Tibial artery (tissue), 4 donors: ENCODE measurements at regions of chr17 and their contacts with region 1.

Region 1: DNA sequence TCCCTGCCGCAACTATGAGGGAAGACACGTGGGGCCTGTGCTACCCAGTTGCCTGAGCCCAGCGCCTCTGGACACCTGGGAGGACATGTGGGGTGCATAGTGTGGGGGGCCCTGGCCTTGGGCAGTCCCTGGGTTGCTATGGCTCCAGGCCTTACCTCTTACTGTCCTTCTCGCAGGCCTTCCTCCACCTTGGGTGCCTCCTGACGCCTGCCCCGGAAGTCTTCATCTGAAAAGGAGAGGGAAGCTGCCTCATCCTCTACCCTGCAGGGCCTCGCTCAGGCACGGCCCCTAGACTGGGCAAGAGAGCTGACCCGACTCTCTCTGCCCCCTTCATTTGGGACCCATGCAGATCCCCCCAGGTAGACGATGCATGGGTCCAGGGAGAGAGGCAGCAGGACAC is 16.5 kb upstream of the MRPS23 start:
- DNase-seq: no peak
- H3K4me3 ChIP-seq: no peak overlapping the region
- H3K27ac ChIP-seq: peak overlapping the region in 1 of 2 donors; percentile 82
- H3K4me1 ChIP-seq: peaks cover 11 to 48% (median 43%) of the 10 kb centered on the region in 4 donors
- H3K27me3 ChIP-seq: no peaks in the 10 kb centered on the region
- CTCF ChIP-seq: no peak

Region 2: DNA sequence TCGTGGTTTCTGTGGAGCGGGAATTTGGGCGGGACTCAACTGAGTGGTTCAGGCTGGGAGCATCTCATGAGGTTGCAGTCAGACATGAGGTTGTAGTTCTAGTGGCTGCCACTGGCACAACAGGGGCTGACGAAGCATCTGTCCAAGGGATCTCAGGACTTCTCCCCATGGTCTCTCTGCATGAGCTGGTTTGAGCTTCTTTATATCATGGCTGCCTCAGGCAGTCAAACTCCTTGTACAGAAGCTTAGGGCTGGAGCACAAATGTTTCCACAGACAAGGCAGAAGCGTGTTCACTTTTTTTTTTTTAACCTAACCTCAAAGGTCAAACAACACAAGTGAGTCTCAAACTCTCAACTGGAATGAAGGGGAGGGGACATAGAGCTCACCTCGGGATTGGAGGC is 366.7 kb before region 1 on chr17:
- intact Hi-C with region 1: no loop called
- DNase-seq: no peak
- H3K4me3 ChIP-seq: no peak overlapping the region
- H3K27ac ChIP-seq: no peak overlapping the region
- H3K4me1 ChIP-seq: no peaks in the 10 kb centered on the region
- H3K27me3 ChIP-seq: no peaks in the 10 kb centered on the region
- CTCF ChIP-seq: no peak

Region 3: GRCh38 chr17:57997085-57997809 is 130.9 kb after region 1 on chr17:
- intact Hi-C with region 1: loop called (anchors 2 kb)
- DNase-seq: no peak
- H3K4me3 ChIP-seq: no peak overlapping the region
- H3K27ac ChIP-seq: no peak overlapping the region
- H3K4me1 ChIP-seq: peaks cover 0 to 23% (median 13%) of the 10 kb centered on the region in 4 donors
- H3K27me3 ChIP-seq: no peaks in the 10 kb centered on the region
- CTCF ChIP-seq: no peak